Adrenal gland (tissue), 19 donors: ENCODE measurements at regions of chr14 and their contacts with region 1.

Region 1: DNA sequence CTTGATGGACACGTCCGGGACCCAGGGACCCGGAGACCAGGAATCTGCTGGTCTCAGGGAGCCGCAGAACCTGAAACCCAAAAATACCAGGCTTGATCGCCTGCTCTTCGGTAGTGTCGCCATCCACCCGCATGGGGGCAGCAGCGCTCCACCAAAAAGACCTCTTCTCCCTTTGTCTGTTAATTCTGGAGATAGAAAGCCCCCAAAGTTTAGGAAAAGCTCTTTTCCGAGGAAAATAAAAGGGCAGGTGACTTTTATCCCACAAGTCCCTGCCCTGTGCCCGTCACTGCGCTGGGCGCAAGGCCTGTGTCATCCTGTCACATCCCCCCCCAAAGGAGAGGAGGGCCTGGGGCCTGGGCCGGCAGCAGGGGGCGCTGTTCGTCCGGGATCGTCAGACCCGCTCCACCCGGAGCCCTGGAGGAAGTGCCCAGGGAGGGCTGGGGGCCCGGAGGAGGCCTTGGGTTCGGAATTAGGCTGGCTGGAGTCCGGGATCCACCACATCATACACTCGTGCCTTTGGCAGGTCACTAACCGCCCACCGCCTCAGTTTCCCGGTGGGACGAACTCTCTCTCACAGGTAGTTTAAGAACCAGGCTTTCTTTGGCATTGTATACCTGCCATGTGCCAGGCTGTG is 31.9 kb downstream of the DAD1 start:
- DNase-seq: peak; percentile 79 to 87 (median 84)
- H3K4me3 ChIP-seq: peak overlapping the region in 1 of 4 donors; percentile 41
- H3K27ac ChIP-seq: no peak overlapping the region
- H3K4me1 ChIP-seq: peaks cover 0 to 17% of the 10 kb centered on the region in 2 donors
- H3K27me3 ChIP-seq: no peaks in the 10 kb centered on the region
- CTCF ChIP-seq: peak; percentile 94 to 100 (median 98)
- POLR2A ChIP-seq: no peak

Region 2: DNA sequence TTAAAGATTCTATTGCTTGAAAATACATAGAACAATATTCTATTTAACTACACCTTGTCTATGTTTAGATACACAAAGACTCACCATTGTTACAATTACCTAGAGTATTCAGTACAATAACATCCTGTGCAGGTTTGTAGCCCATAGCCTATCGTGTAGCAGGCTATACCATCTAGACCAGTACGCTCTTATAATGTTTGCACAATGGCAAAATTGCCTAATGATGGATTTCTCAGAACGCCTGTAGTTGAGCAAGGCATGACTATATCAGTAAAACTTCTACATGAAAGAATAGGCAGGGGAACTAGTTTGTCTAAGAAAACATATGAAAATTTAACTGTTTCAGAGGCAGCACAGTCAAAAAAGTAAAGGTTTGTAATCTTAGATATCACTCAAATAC is 344.0 kb before region 1 on chr14:
- intact Hi-C with region 1: no loop called
- DNase-seq: no peak
- H3K4me3 ChIP-seq: no peak overlapping the region
- H3K27ac ChIP-seq: no peak overlapping the region
- H3K4me1 ChIP-seq: no peaks in the 10 kb centered on the region
- H3K27me3 ChIP-seq: no peaks in the 10 kb centered on the region
- CTCF ChIP-seq: no peak
- POLR2A ChIP-seq: no peak

Region 3: GRCh38 chr14:22653012-22653621 is 96.0 kb after region 1 on chr14:
- intact Hi-C with region 1: loop called (anchors 5 to 10 kb)
- DNase-seq: peak; percentile 63 to 83 (median 72)
- H3K4me3 ChIP-seq: no peak overlapping the region
- H3K27ac ChIP-seq: no peak overlapping the region
- H3K4me1 ChIP-seq: no peaks in the 10 kb centered on the region
- H3K27me3 ChIP-seq: no peaks in the 10 kb centered on the region
- CTCF ChIP-seq: peak; percentile 60 to 89 (median 86)
- POLR2A ChIP-seq: no peak

Region 4: DNA sequence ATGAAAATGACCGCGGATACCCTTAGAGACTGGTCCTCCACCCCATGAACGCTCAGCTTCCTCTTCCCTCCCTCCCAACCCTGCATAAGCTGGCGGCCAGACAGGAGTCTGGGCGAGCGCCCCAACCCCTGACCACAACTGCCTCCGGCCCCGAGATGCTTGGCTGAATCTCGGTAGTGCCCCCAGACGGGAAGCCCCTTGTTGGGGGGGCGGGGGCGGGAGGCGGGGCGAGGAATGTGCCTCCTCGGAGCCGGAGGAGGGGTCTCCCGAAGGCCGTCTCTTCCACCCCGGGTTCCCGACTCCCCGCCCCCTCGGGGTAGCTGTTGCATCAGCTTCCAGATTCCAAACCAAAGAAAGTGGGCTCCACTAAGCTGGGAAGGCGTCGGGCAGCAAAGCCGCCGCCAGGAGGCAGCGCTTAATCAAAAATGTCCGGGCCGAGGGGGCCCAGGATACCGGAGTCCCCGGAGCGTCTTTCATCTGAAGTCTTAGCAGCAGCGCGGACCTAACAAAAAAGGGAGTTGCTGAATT is 265.5 kb after region 1 on chr14:
- intact Hi-C with region 1: loop called (anchors 5 to 10 kb)
- DNase-seq: peak; percentile 66 to 81 (median 71)
- H3K4me3 ChIP-seq: peak overlapping the region in 1 of 4 donors; percentile 42
- H3K27ac ChIP-seq: peak overlapping the region in 1 of 5 donors; percentile 18
- H3K4me1 ChIP-seq: peaks cover 0 to 26% of the 10 kb centered on the region in 2 donors
- H3K27me3 ChIP-seq: no peaks in the 10 kb centered on the region
- CTCF ChIP-seq: peak; percentile 59 to 80 (median 76)
- POLR2A ChIP-seq: no peak

Region 5: DNA sequence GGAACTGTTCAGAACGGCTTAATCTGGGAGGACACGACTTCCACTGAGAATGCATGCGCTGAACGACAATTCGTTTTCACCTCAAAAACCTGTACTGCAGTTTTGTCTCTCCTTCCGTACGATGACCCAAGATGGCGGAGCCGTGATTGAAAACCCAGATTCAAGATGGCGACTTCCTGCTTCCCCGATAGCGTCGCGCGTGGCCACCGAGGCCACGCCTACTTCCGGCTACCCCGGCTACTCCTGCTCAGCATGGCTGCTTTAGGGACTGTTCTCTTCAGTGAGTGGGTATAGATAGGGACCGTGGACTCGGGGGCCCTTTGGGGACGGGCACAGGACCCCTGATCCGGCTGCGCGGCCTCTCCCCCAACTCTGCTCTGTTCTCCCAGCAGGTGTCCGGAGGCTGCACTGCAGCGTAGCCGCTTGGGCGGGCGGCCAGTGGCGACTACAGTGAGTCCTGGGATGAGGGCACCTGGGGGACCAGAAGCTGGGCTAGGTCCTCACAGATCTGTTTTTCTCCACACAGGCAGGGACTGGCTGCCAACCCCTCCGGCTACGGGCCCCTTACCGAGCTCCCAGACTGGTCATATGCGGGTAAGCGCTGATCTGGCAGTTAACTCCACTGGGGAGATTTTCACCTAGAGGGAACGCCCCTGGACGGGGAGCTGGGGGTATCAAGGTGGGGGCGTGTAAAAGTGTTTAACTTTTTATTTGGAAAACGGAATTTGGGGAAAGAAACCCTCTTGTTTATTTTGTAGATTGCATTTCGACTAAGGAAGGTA is 272.7 kb after region 1 on chr14 and contains the start of gene MRPL52:
- intact Hi-C with region 1: loop called in 1 of 2 experiments (anchors 10 kb)
- DNase-seq: peak; percentile 85 to 94 (median 91)
- H3K4me3 ChIP-seq: peak within 1 kb of the TSS in 3 of 4 donors; percentile 40 to 92 (median 88)
- H3K27ac ChIP-seq: peak within 1 kb of the TSS in 4 of 5 donors; percentile 34 to 85 (median 57)
- H3K4me1 ChIP-seq: peaks cover 8 to 10% of the 10 kb centered on the region in 2 donors
- H3K27me3 ChIP-seq: no peaks in the 10 kb centered on the region
- CTCF ChIP-seq: peak in 1 of 6 experiments; percentile 10
- POLR2A ChIP-seq: no peak
- total RNA-seq, gene MRPL52: 58.3 to 390 (median 111) TPM